Activated T-helper 2 cell treated with anti-CD3 and anti-CD28 coated beads, Interferon-gamma antibody, Interleukin-2, Interleukin-4, amounts not matched to agents 10 μg/mL and 5 μg/mL and 100 μg/mL, durations not matched to agents 14 hours and 24 hours and 36 hours (primary cell): ENCODE measurements at regions of chr2 and their contacts with region 1.

Region 1: DNA sequence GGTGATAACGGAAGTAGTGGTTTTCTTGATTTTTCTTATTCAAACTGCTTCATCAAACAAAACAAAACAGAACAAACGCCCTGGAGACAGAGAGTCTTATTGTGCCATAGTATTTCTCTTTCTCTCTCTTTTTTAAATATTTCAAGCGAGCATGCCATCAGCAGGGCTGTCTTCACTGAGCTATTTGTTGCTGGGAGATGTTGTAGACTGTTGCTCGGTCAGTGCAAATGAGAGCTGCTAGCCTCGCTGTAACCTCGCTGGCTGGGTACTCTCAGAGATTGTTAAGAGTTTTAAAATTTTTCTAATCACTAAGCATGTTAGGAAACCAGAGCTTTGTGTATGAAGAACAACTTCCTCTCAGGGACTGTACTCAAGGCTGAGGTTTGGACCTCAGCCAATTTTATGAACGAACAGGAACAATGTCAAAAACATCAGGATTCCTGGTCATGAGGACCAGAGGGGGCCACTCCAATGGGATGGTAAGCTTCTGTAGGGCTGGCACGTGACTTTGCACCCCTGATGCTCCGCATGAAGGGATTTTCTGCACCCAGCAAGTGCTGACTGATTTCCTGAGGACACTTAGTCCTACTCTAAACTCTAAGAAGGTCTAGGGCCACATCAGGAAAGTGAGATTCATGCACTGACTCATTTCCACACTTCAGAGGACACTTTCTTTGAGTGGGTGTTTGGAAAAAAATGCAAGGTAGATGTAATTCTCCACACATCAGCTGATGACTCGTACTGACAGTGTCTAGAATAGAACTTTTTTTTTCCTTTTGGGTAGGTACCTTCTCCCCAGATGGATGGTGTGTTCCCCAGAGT is 59.8 kb upstream of the IL1R1 start:
- DNase-seq: peak; percentile 26
- H3K4me3 Mint-ChIP-seq: peak overlapping the region; percentile 14
- H3K27ac Mint-ChIP-seq: peak overlapping the region; percentile 74
- H3K4me1 Mint-ChIP-seq: peaks cover 28% of the 10 kb centered on the region
- H3K27me3 Mint-ChIP-seq: peaks cover 28% of the 10 kb centered on the region

Region 2: GRCh38 chr2:101806123-101806522 is 276.7 kb before region 1 on chr2:
- intact Hi-C with region 1: no loop called
- DNase-seq: no peak
- H3K4me3 Mint-ChIP-seq: no peak overlapping the region
- H3K27ac Mint-ChIP-seq: peak overlapping the region; percentile 1
- H3K4me1 Mint-ChIP-seq: peaks cover 23% of the 10 kb centered on the region
- H3K27me3 Mint-ChIP-seq: no peaks in the 10 kb centered on the region

Region 3: DNA sequence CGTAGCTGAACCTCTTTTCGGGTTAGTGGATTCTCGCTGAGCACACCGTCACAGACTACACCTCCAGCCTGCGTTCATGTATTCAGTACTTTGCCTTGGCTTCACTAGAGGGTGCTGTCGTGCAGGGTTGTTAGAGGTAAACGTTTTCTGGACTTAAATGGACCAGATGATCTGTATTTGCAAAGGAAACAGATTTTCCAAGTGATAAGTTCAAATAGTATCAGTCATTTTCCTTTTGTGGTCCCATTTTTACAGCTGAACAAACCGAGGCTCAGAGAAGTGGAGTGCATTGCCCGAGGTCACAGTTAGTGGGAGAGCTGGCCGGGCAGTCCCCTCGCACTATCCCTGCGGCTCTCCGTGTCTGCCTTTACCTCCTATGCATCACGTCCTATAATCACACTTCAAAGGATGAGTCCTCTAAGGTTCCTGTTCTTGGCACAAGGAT is 259.4 kb before region 1 on chr2:
- intact Hi-C with region 1: no loop called
- DNase-seq: peak; percentile 51
- H3K4me3 Mint-ChIP-seq: peak overlapping the region; percentile 18
- H3K27ac Mint-ChIP-seq: peak overlapping the region; percentile 21
- H3K4me1 Mint-ChIP-seq: peaks cover 63% of the 10 kb centered on the region
- H3K27me3 Mint-ChIP-seq: no peaks in the 10 kb centered on the region

Region 4: DNA sequence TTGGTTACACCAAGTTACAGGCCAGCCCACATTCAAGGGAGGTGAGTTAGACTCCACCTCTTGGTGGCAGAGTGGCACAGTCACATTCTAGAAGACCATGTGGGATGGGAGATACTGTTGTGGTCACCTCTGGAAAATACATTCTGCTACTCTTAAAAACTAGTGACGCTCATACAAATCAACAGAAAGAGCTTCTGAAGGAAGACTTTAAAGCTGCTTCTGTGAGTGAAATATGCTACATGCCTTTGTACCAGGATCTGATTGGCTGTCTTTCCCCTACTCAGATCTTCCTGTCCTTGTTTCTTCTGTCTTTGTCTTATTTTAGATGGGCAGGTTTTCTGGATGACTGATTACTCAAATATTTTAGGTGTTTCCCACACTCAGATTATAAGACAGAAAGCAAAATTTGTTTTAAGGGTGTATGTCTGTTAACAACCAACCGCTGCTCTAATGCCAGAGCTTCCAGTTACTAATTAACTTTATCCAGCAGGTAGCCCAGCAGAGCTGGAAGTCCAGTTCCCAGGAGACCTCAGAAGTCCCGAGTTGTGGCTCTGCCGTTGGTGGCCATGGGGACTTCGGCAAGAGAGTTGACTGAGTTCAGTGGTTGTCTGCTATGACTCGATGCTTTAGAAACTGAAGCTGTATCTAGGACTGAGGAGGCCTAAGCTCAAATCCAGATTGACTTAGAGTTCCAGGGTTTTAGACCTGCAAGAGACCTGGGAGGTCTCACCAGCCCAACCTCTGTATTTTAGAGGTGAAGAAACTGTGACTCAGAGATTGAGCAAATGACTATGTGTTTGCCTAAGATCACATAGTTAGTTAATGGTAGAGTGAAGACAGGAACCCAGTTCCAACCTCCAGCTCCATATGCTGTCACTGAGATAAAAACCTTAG is 83.6 kb before region 1 on chr2:
- intact Hi-C with region 1: loop called (anchors 1 kb)
- DNase-seq: no peak
- H3K4me3 Mint-ChIP-seq: no peak overlapping the region
- H3K27ac Mint-ChIP-seq: peak overlapping the region; percentile 68
- H3K4me1 Mint-ChIP-seq: peaks cover 26% of the 10 kb centered on the region
- H3K27me3 Mint-ChIP-seq: no peaks in the 10 kb centered on the region

Region 5: GRCh38 chr2:102063941-102064678 is 18.7 kb before region 1 on chr2:
- intact Hi-C with region 1: loop called (anchors 1 kb)
- DNase-seq: no peak
- H3K4me3 Mint-ChIP-seq: no peak overlapping the region
- H3K27ac Mint-ChIP-seq: no peak overlapping the region
- H3K4me1 Mint-ChIP-seq: peaks cover 24% of the 10 kb centered on the region
- H3K27me3 Mint-ChIP-seq: peaks cover 11% of the 10 kb centered on the region

Region 6: GRCh38 chr2:102114290-102114721 is 31.5 kb after region 1 on chr2:
- intact Hi-C with region 1: loop called (anchors 1 kb)
- DNase-seq: no peak
- H3K4me3 Mint-ChIP-seq: no peak overlapping the region
- H3K27ac Mint-ChIP-seq: no peak overlapping the region
- H3K4me1 Mint-ChIP-seq: peaks cover 25% of the 10 kb centered on the region
- H3K27me3 Mint-ChIP-seq: peaks cover 43% of the 10 kb centered on the region

Region 7: GRCh38 chr2:102166189-102166845 is 83.5 kb after region 1 on chr2:
- intact Hi-C with region 1: no loop called
- DNase-seq: no peak
- H3K4me3 Mint-ChIP-seq: no peak overlapping the region
- H3K27ac Mint-ChIP-seq: no peak overlapping the region
- H3K4me1 Mint-ChIP-seq: peaks cover 5% of the 10 kb centered on the region
- H3K27me3 Mint-ChIP-seq: peaks cover 4% of the 10 kb centered on the region

Region 8: DNA sequence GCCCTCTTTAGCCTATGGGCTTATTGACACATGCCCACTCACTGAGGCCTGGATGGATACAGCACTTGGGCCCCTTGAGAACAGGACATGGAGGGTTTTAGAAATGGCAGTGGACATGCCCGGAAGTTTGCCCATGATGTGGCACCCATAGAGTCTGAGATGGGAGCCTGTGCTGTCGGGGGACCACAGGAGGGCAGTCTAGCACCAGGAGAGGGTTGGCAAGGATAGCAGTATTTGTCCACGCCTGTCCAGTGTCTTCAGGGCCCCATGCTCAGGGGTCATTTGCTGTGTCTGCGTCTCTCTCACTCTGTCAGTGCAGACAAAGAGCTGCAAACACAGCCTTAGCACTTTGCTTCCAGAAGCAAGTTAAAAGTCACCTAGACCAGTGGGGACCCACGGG is 152.7 kb after region 1 on chr2:
- intact Hi-C with region 1: loop called (anchors 2 kb)
- DNase-seq: no peak
- H3K4me3 Mint-ChIP-seq: no peak overlapping the region
- H3K27ac Mint-ChIP-seq: no peak overlapping the region
- H3K4me1 Mint-ChIP-seq: peaks cover 48% of the 10 kb centered on the region
- H3K27me3 Mint-ChIP-seq: peaks cover 2% of the 10 kb centered on the region

Region 9: GRCh38 chr2:102366406-102367112 is 283.8 kb after region 1 on chr2:
- intact Hi-C with region 1: loop called (anchors 2 kb)
- DNase-seq: no peak
- H3K4me3 Mint-ChIP-seq: peak overlapping the region; percentile 63
- H3K27ac Mint-ChIP-seq: peak overlapping the region; percentile 96
- H3K4me1 Mint-ChIP-seq: peaks cover 78% of the 10 kb centered on the region
- H3K27me3 Mint-ChIP-seq: no peaks in the 10 kb centered on the region

Region 10: DNA sequence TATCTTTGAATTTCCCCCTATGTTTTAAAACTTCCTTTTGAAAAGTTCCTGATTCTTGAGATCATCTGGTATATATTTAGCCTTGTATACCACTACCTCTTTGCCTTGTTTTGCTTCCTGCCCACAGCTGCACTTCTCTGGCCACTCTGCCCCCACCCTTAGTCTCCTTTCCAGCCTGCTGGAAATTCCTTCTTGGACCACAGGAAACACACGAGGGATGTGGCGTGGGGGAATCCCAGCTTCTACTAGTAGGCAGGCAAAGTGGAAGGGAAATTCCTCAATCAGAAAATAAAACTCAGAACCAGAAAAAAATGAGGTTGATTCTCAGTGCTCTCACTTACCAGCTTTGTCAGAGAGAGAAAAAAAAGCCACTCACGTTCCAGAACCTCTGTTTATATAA is 353.5 kb after region 1 on chr2:
- intact Hi-C with region 1: loop called (anchors 1 kb)
- DNase-seq: no peak
- H3K4me3 Mint-ChIP-seq: peak overlapping the region; percentile 9
- H3K27ac Mint-ChIP-seq: peak overlapping the region; percentile 63
- H3K4me1 Mint-ChIP-seq: peaks cover 32% of the 10 kb centered on the region
- H3K27me3 Mint-ChIP-seq: no peaks in the 10 kb centered on the region